ENCODE measurements at regions of chr9 and their contacts with region 1.

Region 1: GRCh38 chr9:91422758-91423711 is 597 bp downstream of the NFIL3 start:
- DNase-seq: peak; percentile 54 to 78
- H3K4me3 ChIP-seq: peak overlapping the region; percentile 51
- H3K4me1 ChIP-seq: no peaks in the 10 kb centered on the region; the same call in 1 of the 2 replicates
- H3K27me3 ChIP-seq: peaks cover 10% of the 10 kb centered on the region; the same call in 1 of the 2 replicates

Region 2: GRCh38 chr9:91089405-91090129 is 333.5 kb before region 1 on chr9:
- in situ Hi-C with region 1: no loop called
- DNase-seq: no peak
- H3K4me3 ChIP-seq: no peak overlapping the region
- H3K4me1 ChIP-seq: no peaks in the 10 kb centered on the region
- H3K27me3 ChIP-seq: no peaks in the 10 kb centered on the region

Region 3: GRCh38 chr9:91354881-91355280 is 68.2 kb before region 1 on chr9:
- in situ Hi-C with region 1: no loop called
- DNase-seq: no peak
- H3K4me3 ChIP-seq: no peak overlapping the region
- H3K4me1 ChIP-seq: no peaks in the 10 kb centered on the region; the same call in 1 of the 2 replicates
- H3K27me3 ChIP-seq: no peaks in the 10 kb centered on the region

Region 4: DNA sequence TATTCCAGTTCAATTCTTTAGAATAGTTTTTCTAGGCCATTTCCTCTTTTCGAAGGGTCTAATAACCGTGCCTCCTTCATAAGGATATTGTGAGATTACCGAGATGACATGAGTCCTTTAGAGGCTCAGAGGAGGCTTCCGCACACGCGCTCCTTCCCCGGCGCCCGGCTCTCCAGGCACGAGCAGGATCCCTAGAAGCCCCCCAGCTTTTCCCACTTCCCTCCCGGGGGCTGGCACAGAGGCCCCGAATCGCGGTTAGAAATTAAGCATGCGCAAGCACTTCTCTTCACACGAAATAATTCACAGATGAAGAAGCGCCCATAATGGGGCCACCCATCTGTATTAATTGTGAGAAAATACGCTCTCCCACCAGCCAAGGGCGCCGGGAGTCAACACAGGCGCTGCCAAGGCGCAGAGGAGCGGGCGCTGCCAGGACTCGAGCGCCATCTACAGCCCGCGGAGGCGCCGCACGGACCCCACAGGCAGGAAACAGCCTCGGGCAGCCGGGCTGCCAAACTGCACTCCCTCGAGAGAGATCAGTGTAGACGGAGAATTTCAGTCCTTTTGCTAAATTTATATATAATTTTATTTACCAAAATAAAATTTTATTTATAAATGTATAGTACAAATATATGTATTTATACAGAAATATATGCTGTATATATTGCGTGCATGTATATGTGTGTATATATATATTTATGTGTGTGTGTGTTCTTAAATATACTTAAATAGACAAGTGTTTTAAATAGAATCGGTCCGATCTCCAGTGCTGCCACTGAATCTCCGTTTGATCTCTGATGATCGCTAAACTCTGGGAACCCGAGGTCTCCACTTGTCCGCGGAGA is 258.6 kb after region 1 on chr9:
- in situ Hi-C with region 1: loop called (anchors 10 kb)
- DNase-seq: peak; percentile 74 to 88
- H3K4me3 ChIP-seq: no peak overlapping the region; the same call in 1 of the 2 replicates
- H3K4me1 ChIP-seq: peaks cover 12% of the 10 kb centered on the region
- H3K27me3 ChIP-seq: no peaks in the 10 kb centered on the region

Region 5: DNA sequence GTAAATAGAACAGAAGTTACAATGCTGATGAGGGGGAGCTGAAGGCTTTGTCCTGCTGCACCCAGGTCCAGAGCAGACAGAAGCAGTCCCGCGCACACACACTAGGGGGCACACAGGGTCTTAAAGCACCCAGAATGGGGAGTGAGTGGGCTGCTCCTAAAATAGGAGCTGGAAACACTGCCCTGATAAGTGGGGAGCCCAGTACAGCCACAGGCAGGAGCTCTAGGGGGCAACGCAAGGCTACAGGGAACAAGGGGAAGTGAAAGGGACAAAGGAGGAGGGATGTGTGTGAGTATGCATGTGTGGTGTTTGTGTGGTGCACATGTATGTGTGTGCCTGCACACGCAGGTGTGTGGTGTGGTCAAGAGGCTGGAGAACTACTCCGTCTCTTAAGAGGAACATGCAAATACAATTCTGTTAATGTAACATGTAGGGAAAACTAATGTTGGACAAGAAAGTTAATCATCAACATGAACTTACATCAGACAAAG is 335.5 kb after region 1 on chr9:
- in situ Hi-C with region 1: no loop called
- DNase-seq: peak; percentile 15 to 82
- H3K4me3 ChIP-seq: no peak overlapping the region
- H3K4me1 ChIP-seq: no peaks in the 10 kb centered on the region
- H3K27me3 ChIP-seq: no peaks in the 10 kb centered on the region

Region 6: GRCh38 chr9:92820964-92821363 is 1397.9 kb after region 1 on chr9:
- in situ Hi-C with region 1: no loop called
- DNase-seq: no peak
- H3K4me3 ChIP-seq: no peak overlapping the region
- H3K4me1 ChIP-seq: peaks cover 9% of the 10 kb centered on the region
- H3K27me3 ChIP-seq: no peaks in the 10 kb centered on the region

Measured in HAP-1 (cell line).